ENCODE measurements at regions of chr4 and their contacts with region 1.

Region 1: DNA sequence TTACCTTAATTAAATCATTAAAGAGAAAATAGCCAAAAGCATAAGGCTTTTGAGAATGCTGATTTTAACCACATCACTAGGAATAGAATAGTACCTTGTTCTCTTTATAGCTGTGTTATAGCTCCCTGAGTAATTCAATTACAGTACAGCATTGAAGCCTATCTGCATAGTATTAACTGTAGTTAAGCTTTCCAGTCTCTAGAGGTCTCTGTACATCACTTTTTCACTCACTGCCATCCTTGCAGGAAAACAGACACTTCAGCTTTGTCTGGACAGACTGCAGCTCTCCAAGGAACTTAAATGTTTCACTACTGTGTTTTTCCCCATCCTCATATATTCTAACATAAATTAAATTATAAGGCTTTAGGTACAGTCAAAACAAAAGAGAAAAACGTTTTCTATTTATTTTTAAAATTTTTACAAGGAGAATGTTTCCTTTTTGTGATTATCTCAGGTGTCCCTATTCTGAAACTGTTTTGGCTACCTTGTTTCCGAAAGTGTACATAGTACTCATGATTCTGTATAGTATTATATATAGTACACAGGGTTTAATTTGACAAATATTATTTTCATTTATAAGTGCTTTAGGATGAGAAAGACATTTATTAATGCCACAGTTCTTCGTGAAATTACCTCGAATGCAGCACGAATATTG is 407.9 kb downstream of the PCDH18 start:
- DNase-seq: peak; percentile 35
- H3K4me3 ChIP-seq: no peak overlapping the region
- H3K27ac ChIP-seq: no peak overlapping the region
- H3K4me1 ChIP-seq: no peaks in the 10 kb centered on the region
- H3K27me3 ChIP-seq: no peaks in the 10 kb centered on the region
- CTCF ChIP-seq: peak in 1 of 2 donors; percentile 42
- POLR2A ChIP-seq: no peak

Region 2: GRCh38 chr4:137106287-137106686 is 18.1 kb before region 1 on chr4:
- CTCF ChIA-PET with region 1: interaction called, 10 read pairs
- POLR2A ChIA-PET with region 1: no interaction called
- dilution Hi-C with region 1: no loop called
- intact Hi-C with region 1: no loop called
- DNase-seq: no peak
- H3K4me3 ChIP-seq: no peak overlapping the region
- H3K27ac ChIP-seq: no peak overlapping the region
- H3K4me1 ChIP-seq: no peaks in the 10 kb centered on the region
- H3K27me3 ChIP-seq: no peaks in the 10 kb centered on the region
- CTCF ChIP-seq: no peak
- POLR2A ChIP-seq: no peak

Region 3: GRCh38 chr4:137610960-137611359 is 486.6 kb after region 1 on chr4:
- CTCF ChIA-PET with region 1: interaction called, 8 read pairs
- POLR2A ChIA-PET with region 1: no interaction called
- dilution Hi-C with region 1: no loop called
- intact Hi-C with region 1: loop called (anchors 2 kb)
- DNase-seq: peak; percentile 29
- H3K4me3 ChIP-seq: no peak overlapping the region
- H3K27ac ChIP-seq: no peak overlapping the region
- H3K4me1 ChIP-seq: no peaks in the 10 kb centered on the region
- H3K27me3 ChIP-seq: no peaks in the 10 kb centered on the region
- CTCF ChIP-seq: peak; percentile 32 to 51
- POLR2A ChIP-seq: no peak

Region 4: GRCh38 chr4:137707626-137708025 is 583.2 kb after region 1 on chr4:
- CTCF ChIA-PET with region 1: no interaction called
- POLR2A ChIA-PET with region 1: no interaction called
- dilution Hi-C with region 1: no loop called
- intact Hi-C with region 1: no loop called
- DNase-seq: peak; percentile 40
- H3K4me3 ChIP-seq: no peak overlapping the region
- H3K27ac ChIP-seq: no peak overlapping the region
- H3K4me1 ChIP-seq: no peaks in the 10 kb centered on the region
- H3K27me3 ChIP-seq: no peaks in the 10 kb centered on the region
- CTCF ChIP-seq: no peak
- POLR2A ChIP-seq: no peak

Region 5: GRCh38 chr4:137861682-137862081 is 737.3 kb after region 1 on chr4:
- CTCF ChIA-PET with region 1: interaction called, 40 read pairs
- POLR2A ChIA-PET with region 1: no interaction called
- dilution Hi-C with region 1: no loop called
- intact Hi-C with region 1: loop called (anchors 1 kb)
- DNase-seq: peak; percentile 32
- H3K4me3 ChIP-seq: no peak overlapping the region
- H3K27ac ChIP-seq: no peak overlapping the region
- H3K4me1 ChIP-seq: no peaks in the 10 kb centered on the region
- H3K27me3 ChIP-seq: no peaks in the 10 kb centered on the region
- CTCF ChIP-seq: peak; percentile 11 to 18
- POLR2A ChIP-seq: no peak

Region 6: DNA sequence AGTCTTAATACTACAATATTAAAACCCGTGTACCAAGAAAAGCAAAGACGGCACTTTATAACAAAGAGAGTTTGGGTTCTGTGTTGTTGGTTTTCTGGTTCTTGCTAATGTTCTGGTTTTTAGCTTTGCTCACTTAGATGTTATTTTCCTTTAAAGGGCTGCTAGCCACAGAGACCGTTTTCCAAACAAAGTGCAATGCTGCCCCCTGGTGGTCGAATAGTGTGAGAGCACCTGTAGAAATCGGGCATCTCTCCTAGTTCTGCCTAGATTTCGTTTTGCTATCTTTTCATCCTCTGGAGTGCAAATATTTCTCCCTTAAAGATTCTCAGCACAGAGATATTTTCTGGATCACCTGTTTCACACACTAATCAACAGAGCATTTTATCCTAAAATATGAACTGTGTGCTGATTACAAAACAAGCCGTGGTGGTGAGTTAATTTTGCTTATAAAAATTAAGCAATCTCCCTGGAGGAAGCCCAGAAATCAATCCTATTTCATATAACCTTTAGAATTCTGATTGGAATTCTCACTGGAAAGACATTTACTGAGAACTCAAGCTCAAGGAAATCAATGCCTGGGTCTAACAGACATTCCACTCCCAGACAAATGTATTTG is 1556.7 kb after region 1 on chr4:
- CTCF ChIA-PET with region 1: interaction called, 24 read pairs
- POLR2A ChIA-PET with region 1: no interaction called
- dilution Hi-C with region 1: no loop called
- intact Hi-C with region 1: loop called (anchors 2 kb)
- DNase-seq: peak; percentile 58
- H3K4me3 ChIP-seq: no peak overlapping the region
- H3K27ac ChIP-seq: no peak overlapping the region
- H3K4me1 ChIP-seq: no peaks in the 10 kb centered on the region
- H3K27me3 ChIP-seq: peaks cover 24 to 48% of the 10 kb centered on the region in 2 experiments
- CTCF ChIP-seq: peak; percentile 72 to 76
- POLR2A ChIP-seq: no peak